ENCODE measurements at regions of chr7 and their contacts with region 1.

Region 1: DNA sequence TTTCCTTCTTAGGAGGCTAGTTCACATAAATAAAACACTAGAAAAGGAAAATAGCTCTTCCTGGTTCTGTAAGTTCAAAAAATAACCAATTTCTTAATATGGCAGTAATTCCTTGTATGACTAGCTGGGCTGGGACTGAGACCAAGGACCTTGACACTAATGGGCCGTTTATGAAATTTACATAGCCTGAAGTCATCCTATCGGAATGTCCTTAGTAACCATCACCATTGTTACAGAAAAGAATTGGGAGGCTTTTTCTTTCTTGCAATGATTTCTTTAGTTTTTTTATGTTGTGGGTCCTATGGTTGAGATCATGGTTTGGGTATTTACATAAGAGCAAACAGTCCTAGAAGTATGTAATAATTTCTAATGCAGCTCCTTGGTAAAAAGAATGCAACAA is 87.1 kb upstream of the HDAC9 start:
- DNase-seq: peak; percentile 75
- H3K4me3 ChIP-seq: no peak overlapping the region
- H3K27ac ChIP-seq: peak overlapping the region; percentile 28
- H3K4me1 ChIP-seq: peaks cover 23% of the 10 kb centered on the region
- H3K27me3 ChIP-seq: no peaks in the 10 kb centered on the region
- CTCF ChIP-seq: no peak
- POLR2A ChIP-seq: no peak

Region 2: DNA sequence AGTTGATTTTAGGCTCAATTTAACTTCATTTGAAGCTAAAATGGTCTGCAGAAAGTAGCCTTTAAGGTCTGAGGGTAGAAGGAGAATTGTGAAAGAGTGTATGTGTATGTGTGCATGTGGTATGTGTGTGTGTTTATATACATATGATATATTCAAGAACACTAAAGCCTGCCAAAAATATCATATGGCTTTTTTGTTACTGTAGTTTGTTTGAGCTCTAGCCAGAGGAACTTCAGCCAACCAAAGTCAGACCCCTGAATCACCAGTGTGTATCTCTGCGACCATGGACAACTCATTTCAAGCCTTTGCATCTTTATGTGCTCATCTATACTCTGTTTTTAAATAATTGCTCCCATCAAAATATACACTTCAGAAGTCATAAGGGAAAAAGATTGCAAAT is 28.6 kb after region 1 on chr7:
- CTCF ChIA-PET with region 1: no interaction called
- POLR2A ChIA-PET with region 1: no interaction called
- dilution Hi-C with region 1: no loop called
- intact Hi-C with region 1: no loop called
- DNase-seq: no peak
- H3K4me3 ChIP-seq: no peak overlapping the region
- H3K27ac ChIP-seq: no peak overlapping the region
- H3K4me1 ChIP-seq: no peaks in the 10 kb centered on the region
- H3K27me3 ChIP-seq: no peaks in the 10 kb centered on the region
- CTCF ChIP-seq: no peak
- POLR2A ChIP-seq: no peak

Region 3: DNA sequence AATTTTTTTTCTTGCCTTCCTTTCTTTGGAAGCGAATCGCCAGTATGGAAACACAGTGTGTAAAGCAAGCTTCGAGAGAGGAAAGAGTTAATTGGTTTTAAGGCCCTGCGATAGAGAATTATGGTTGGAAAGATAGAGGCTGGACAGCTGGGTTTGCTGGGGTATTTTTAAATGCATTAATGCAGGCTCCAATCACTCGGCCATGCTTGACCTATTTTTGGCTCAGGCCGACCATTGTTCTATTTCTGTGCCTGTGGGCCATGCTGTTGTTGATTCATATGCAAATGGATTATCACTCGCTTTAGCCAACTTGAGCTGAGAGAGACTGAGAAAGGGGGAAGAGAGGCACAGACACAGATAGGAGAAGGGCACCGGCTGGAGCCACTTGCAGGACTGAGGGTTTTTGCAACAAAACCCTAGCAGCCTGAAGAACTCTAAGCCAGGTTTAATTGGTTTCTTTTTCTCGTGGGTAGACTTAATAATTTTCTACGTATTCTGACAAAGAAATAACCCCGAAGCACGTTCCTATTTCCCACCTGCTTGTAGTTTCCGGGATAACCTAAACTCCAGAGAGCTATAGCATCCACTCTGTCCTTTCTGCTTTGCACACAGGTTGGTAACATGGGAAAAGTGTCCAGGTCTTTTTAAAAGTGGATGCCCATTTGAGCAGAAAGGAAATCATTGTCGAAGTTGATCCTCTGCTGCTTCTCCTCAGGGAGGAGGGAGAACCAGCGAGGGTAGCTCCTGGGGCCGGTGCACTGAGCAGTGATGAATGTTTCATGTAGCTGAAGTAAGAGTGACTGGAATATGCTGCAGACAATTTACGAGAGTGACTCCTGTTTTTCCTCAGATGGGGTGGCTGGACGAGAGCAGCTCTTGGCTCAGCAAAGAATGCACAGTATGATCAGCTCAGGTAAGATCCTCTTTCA is 87.2 kb after region 1 on chr7 and contains the start of gene HDAC9:
- CTCF ChIA-PET with region 1: no interaction called
- POLR2A ChIA-PET with region 1: no interaction called
- dilution Hi-C with region 1: no loop called
- intact Hi-C with region 1: loop called (anchors 5 kb)
- DNase-seq: peak; percentile 63
- H3K4me3 ChIP-seq: no peak within 1 kb of the TSS
- H3K27ac ChIP-seq: no peak within 1 kb of the TSS
- H3K4me1 ChIP-seq: peaks cover 4% of the 10 kb centered on the region
- H3K27me3 ChIP-seq: no peaks in the 10 kb centered on the region
- CTCF ChIP-seq: no peak
- POLR2A ChIP-seq: no peak
- total RNA-seq, gene HDAC9: 11.6 and 14.6 TPM in 2 replicates